ENCODE measurements at regions of chr19 and their contacts with region 1.

Region 1: DNA sequence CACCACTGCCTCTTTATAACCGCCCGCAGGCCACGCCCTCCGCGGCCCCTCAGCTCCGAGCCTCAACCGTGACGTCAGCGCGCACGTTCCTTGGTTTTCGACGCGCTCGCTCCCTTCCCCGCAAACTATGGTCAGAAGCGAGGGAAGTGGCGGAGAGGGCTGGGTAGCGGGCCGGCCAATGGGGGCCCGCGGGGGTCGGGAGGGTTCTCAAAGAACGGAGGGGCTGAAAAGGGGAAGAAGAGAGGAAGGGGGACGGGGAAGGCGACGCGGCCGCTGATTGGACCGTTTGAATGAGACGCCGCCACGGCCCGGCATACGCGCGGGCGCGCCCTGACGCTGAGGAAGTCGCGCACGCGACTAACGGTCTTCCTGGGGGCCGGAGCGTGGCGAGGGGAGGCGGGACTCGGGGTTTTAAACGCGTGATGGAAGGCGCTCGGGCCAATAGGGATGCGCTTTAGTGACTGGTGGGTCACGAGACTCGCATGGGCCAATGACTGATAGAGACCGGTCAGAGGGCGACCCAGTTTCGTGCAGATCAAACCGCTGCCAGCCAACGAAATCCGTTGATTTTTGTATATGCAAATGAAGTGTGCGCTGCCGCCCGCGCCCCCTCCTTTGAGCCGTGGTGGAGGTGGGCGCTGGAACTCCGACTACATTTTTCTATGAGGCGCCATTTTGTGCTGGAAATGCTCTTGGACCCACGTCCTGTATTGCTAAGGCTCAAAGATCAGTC is 378 bp upstream of the UBE2S start:
- DNase-seq: peak; percentile 99
- H3K4me3 Mint-ChIP-seq: peak overlapping the region; percentile 83
- H3K27ac Mint-ChIP-seq: peak overlapping the region; percentile 97
- H3K4me1 Mint-ChIP-seq: peaks cover 45% of the 10 kb centered on the region
- H3K27me3 Mint-ChIP-seq: peaks cover 14% of the 10 kb centered on the region

Region 2: DNA sequence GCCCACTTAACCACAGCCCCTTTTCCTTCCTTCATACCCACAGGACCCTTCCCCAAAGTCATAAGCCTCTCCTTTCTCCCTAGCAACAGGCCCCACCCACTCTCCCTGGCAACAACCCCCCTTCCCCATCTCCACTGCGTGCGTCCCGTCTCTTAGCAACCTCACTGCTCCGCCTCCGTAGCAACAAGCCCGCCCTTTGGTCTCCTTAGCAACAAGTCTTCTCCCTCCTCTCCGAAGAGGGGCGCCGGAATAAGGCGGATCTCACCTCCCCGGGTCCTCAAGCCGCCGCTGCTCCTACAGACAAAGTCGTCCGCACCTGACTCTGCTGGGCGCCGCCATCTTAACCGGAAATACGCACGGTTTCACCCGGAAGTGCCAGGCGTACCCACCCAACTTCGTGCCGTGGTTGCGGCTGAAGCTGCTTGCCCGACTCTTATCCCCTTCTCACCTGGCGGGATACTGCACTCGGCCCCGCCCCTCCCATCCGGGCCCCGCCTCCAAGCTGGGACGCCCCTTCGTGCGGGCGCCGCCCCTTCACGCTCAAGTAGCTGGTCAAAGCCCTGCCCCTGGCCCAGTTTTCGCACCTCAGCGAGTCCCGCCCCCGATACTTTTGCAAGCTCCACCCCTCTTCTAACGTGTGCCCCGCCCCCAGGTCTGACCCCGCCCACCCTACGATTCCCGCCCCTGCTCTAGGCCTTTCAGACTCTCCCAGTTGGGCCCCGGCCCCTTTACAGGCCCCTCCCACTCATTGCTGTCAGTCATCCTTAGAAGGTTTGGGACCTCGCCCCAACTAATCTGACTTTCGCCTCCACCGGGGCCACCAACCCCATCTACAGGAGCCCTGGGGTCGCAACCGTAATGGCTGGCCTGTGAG is 128.0 kb before region 1 on chr19 and contains the start of gene HSPBP1:
- CTCF ChIA-PET with region 1: no interaction called
- POLR2A ChIA-PET with region 1: interaction called, 15 read pairs
- DNase-seq: peak; percentile 98
- H3K4me3 Mint-ChIP-seq: peak within 1 kb of the TSS; percentile 100
- H3K27ac Mint-ChIP-seq: peak within 1 kb of the TSS; percentile 97
- H3K4me1 Mint-ChIP-seq: peaks cover 57% of the 10 kb centered on the region
- H3K27me3 Mint-ChIP-seq: peaks cover 8% of the 10 kb centered on the region
- total RNA-seq, gene HSPBP1: 28.9 to 29.0 TPM

Region 3: GRCh38 chr19:55339048-55339888 is 68.7 kb before region 1 on chr19 and contains the start of gene KMT5C:
- CTCF ChIA-PET with region 1: interaction called, 6 read pairs
- POLR2A ChIA-PET with region 1: interaction called, 24 read pairs
- DNase-seq: peak; percentile 100
- H3K4me3 Mint-ChIP-seq: peak within 1 kb of the TSS; percentile 90
- H3K27ac Mint-ChIP-seq: peak within 1 kb of the TSS; percentile 91
- H3K4me1 Mint-ChIP-seq: peaks cover 19% of the 10 kb centered on the region
- H3K27me3 Mint-ChIP-seq: peaks cover 12% of the 10 kb centered on the region
- total RNA-seq, gene KMT5C: 27.2 to 28.9 TPM

Region 4: GRCh38 chr19:55418185-55418584 is 10.2 kb after region 1 on chr19:
- CTCF ChIA-PET with region 1: interaction called, 4 read pairs
- POLR2A ChIA-PET with region 1: interaction called, 22 read pairs
- DNase-seq: peak; percentile 56
- H3K4me3 Mint-ChIP-seq: no peak overlapping the region
- H3K27ac Mint-ChIP-seq: no peak overlapping the region
- H3K4me1 Mint-ChIP-seq: peaks cover 21% of the 10 kb centered on the region
- H3K27me3 Mint-ChIP-seq: peaks cover 12% of the 10 kb centered on the region